Activated CD4-positive, alpha-beta T cell treated with anti-CD3 and anti-CD28 coated beads, Interleukin-2, amount 10 ng/mL, durations not matched to agents 24 days and 14 days (primary cell): ENCODE measurements at regions of chr6 and their contacts with region 1.

Region 1: DNA sequence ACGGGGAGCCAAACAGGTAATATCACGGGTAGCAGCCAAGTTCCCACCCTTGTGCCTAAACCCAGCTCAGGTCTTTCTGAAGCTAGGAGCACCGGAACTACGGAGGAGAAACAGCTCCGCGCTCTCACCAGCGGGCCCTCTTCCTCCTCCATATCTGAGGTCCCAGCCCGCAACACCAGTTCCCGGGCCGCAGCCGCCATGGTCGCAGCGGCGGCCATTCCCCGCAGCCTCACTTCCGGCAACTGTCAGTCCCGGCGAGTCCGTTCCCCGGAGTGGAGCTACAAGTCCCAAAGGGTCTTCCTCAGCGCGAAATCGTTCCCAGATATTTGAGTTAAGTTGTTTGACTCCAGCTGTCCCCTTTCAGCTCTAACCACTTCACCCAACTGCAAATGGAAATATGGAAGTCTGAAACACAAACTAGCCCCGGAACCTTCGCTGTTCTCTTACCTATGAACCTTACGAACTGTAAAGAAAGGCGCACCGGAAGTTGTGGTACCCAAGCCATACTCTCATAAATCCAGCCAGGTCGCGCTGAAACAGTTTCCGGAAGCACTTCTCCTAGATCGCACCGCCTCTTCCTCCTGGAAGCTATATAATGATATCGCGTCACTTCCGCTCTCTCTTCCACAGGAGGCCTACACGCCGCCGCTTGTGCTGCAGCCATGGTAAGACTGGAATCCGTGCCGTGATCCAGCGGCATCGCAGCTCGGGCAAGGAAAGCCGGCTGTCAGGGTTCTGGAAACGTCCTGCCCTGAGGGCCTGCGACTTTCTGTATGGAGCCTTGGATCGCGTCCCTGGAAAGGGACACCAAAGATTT is at the starts of genes RPS18 and VPS52:
- DNase-seq: peak; percentile 97
- H3K4me3 Mint-ChIP-seq: peak within 1 kb of the TSS; percentile 94
- H3K27ac Mint-ChIP-seq: peak within 1 kb of the TSS; percentile 98
- H3K4me1 Mint-ChIP-seq: peaks cover 54% of the 10 kb centered on the region
- H3K27me3 Mint-ChIP-seq: no peaks in the 10 kb centered on the region
- total RNA-seq, gene RPS18: 3,200 and 3,212 TPM in 2 replicates
- total RNA-seq, gene VPS52: 59.9 and 64.9 TPM in 2 replicates

Region 2: DNA sequence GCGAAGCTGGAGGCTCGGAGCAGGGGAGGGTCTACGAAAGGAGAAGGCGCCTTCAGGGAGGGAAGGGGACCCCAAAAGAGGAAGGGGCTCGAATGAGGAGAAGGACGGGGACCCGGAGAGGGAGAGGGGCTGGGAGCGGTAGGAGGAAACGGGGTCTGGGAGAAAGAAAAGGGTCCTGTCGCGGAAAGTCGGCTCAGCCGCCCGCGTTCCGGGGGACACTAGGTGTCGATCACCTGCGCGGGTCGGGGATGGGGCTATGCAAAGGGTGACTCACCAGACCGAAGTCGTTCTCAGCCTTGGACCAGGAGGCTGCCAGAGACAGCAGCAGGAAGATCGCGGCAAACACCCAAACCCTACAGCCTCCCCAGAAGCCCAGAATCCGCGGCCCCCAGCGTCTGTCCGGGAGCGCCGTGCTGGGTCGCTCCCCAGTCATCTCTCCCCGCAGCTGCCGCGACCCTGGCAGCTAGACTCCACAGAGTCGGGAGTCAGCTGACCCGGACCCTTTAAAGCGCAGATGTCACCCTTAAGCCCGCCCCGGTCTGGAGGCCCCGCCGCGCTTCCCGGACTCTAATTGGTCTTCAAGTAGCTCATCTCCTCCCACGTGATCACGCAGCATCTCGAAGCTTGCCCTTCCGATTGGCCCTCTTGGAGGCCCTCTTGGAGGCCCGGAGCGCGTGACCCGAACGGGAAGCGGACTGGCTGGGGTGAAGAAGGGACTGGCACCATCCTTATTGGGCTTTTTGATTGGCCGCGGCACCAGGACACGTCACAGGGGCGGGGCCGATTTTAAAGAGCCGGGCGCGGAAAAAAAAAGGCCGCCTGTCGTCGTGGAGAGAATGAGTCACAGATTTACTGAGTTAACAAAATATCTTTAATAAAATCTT is 1409.1 kb before region 1 on chr6 and contains the start of gene NEU1:
- intact Hi-C with region 1: loop called (anchors 2 kb)
- DNase-seq: peak; percentile 100
- H3K4me3 Mint-ChIP-seq: peak within 1 kb of the TSS; percentile 93
- H3K27ac Mint-ChIP-seq: peak within 1 kb of the TSS; percentile 91
- H3K4me1 Mint-ChIP-seq: peaks cover 21% of the 10 kb centered on the region
- H3K27me3 Mint-ChIP-seq: peaks cover 3% of the 10 kb centered on the region
- total RNA-seq, gene NEU1: 20.4 and 22.2 TPM in 2 replicates

Region 3: DNA sequence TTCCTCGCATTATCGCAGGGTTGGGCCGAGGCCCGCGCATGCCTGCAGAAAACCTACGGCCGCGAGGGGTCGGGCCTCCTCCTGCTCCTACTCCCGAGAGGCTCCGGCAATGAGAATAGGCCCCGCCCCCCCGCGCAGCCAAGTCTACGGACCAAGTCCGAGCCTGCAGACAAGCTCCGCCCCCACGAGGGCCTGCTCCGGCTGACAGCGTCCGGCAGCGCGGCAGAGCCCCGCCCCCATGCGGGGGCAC is 1076.1 kb before region 1 on chr6:
- intact Hi-C with region 1: no loop called
- DNase-seq: peak; percentile 100
- H3K4me3 Mint-ChIP-seq: peak overlapping the region; percentile 98
- H3K27ac Mint-ChIP-seq: peak overlapping the region; percentile 99
- H3K4me1 Mint-ChIP-seq: peaks cover 40% of the 10 kb centered on the region
- H3K27me3 Mint-ChIP-seq: peaks cover 2% of the 10 kb centered on the region

Region 4: GRCh38 chr6:33248925-33249731 is 22.5 kb before region 1 on chr6:
- intact Hi-C with region 1: loop called (anchors 1 kb)
- DNase-seq: peak; percentile 98
- H3K4me3 Mint-ChIP-seq: peak overlapping the region; percentile 91
- H3K27ac Mint-ChIP-seq: peak overlapping the region; percentile 94
- H3K4me1 Mint-ChIP-seq: peaks cover 34% of the 10 kb centered on the region
- H3K27me3 Mint-ChIP-seq: peaks cover 4% of the 10 kb centered on the region

Region 5: DNA sequence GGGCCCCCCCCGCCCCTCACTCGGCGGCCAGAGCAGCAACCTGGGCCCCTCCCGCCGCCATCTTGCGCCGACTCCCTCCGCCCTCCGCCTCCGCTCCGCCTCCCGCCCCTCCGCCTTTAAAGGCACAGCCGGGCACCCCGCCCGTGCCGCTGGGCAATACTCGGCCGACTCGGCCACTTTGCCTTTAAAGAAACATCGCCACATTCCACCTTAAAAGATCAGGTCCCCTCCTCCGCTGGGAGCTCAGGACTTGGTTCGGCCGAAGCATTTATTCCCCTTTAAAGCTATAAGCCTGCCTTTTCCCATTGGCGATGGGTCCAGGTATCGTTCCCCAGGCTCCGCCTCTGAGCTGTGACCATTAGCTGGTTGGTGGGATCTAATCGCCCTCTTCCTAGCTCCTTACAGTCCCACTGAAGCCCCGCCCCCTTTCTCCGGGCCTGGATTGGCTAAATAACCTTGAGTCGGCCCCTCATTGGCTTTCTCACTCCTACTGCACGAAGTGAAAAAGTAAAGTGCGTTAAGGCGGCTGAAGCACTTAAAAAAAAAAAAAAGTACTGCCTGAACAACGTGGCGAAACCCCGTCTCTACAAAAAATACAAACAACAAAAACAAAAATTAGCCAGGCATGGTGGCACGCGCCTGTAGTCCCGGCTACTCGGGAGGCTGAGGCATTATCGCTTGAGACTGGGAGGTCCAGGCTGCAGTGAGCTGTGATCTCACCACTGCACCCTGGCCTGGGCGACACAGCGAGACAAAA is 46.2 kb after region 1 on chr6 and contains the start of gene ZBTB22:
- intact Hi-C with region 1: loop called (anchors 1 kb)
- DNase-seq: peak; percentile 98
- H3K4me3 Mint-ChIP-seq: peak within 1 kb of the TSS; percentile 96
- H3K27ac Mint-ChIP-seq: peak within 1 kb of the TSS; percentile 96
- H3K4me1 Mint-ChIP-seq: peaks cover 53% of the 10 kb centered on the region
- H3K27me3 Mint-ChIP-seq: no peaks in the 10 kb centered on the region
- total RNA-seq, gene ZBTB22: 11.3 and 14.3 TPM in 2 replicates

Region 6: DNA sequence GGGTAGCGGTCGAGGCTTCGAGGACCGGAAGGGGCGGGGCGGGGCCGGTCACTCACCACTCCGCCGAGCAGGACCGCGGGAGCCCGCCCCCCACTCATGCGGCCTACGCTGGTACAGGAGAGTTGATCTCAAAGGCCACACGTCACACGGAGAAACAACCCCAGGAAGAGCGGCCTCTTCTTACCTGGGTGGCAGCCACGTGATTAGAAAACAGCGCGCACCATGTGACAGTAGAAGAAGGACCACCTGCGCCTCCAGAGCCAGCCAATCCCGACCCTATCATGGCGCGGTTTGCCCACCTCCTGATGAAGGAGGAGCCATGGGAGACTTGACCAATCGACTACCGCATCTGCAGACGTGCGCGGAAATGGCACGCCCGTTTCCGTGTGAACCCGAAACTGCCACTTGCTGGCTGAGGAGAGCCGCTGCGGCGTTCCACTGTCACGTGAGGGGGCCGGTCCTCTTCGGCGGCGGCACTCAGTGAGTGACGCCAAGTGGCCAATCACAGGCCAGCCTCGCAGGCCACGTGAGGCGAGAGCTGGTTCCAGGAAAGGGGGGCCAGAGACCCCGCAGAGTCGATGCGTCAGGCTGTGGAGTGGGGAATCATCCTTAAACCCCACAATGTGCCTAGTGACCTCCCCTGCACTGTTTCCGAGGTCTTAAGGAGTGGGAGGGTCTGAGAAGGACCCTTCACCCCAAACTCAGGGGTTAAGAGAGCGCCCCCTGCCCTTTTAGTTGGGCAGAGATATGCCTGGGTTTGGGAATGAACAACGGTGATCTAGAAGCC is 146.4 kb after region 1 on chr6 and contains the start of gene CUTA:
- intact Hi-C with region 1: loop called (anchors 10 kb)
- DNase-seq: peak; percentile 100
- H3K4me3 Mint-ChIP-seq: peak within 1 kb of the TSS; percentile 92
- H3K27ac Mint-ChIP-seq: peak within 1 kb of the TSS; percentile 96
- H3K4me1 Mint-ChIP-seq: peaks cover 63% of the 10 kb centered on the region
- H3K27me3 Mint-ChIP-seq: peaks cover 1% of the 10 kb centered on the region
- total RNA-seq, gene CUTA: 120 and 124 TPM in 2 replicates